ENCODE measurements at regions of chr3 and their contacts with region 1.

Region 1: GRCh38 chr3:101381809-101382208 is 61.4 kb upstream of the IMPG2 start:
- DNase-seq: no peak
- ATAC-seq: peak; percentile 34
- H3K4me3 Mint-ChIP-seq: no peak overlapping the region
- H3K27ac Mint-ChIP-seq: no peak overlapping the region
- H3K4me1 Mint-ChIP-seq: peaks cover 43% of the 10 kb centered on the region
- H3K27me3 Mint-ChIP-seq: no peaks in the 10 kb centered on the region
- CTCF ChIP-seq: no peak

Region 2: DNA sequence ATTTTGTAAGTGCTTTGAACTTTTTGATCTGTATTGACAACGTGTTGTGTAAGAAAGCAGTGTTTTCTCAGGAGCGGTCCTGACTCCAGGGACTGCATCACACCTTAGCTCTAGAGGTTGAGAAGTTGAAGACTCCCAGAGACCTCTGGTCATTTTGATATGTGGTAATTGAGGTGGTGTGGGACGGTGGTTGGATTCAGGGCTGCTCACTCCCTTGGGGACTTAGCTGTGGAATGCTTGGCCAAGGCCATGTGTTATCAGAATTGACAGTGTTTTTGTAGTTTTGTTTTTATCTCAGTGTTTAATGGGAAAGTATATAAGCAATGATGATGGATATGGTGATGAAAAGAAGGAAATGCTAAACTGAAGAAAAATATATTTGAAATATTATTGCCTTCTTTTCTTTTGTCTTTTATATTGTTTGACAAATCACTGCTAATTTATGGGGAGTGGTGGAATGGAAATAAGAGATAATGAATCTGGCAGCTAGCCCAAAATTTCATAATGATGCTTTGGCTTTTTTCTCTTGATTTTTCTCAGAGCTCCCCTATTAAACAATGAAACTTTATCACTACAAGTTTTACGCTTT is 1548.1 kb before region 1 on chr3:
- CTCF ChIA-PET with region 1: no interaction called
- POLR2A ChIA-PET with region 1: no interaction called
- intact Hi-C with region 1: loop called (anchors 5 kb)
- DNase-seq: no peak
- ATAC-seq: no peak
- H3K4me3 Mint-ChIP-seq: no peak overlapping the region
- H3K27ac Mint-ChIP-seq: no peak overlapping the region
- H3K4me1 Mint-ChIP-seq: no peaks in the 10 kb centered on the region
- H3K27me3 Mint-ChIP-seq: no peaks in the 10 kb centered on the region
- CTCF ChIP-seq: no peak

Region 3: GRCh38 chr3:100463002-100463401 is 918.8 kb before region 1 on chr3:
- CTCF ChIA-PET with region 1: interaction called, 6 read pairs
- POLR2A ChIA-PET with region 1: no interaction called
- intact Hi-C with region 1: loop called (anchors 5 kb)
- DNase-seq: no peak
- ATAC-seq: no peak
- H3K4me3 Mint-ChIP-seq: no peak overlapping the region
- H3K27ac Mint-ChIP-seq: no peak overlapping the region
- H3K4me1 Mint-ChIP-seq: no peaks in the 10 kb centered on the region
- H3K27me3 Mint-ChIP-seq: peaks cover 3% of the 10 kb centered on the region
- CTCF ChIP-seq: no peak

Region 4: GRCh38 chr3:100737334-100737733 is 644.5 kb before region 1 on chr3:
- CTCF ChIA-PET with region 1: no interaction called
- POLR2A ChIA-PET with region 1: no interaction called
- intact Hi-C with region 1: loop called (anchors 1 kb)
- DNase-seq: no peak
- ATAC-seq: no peak
- H3K4me3 Mint-ChIP-seq: no peak overlapping the region
- H3K27ac Mint-ChIP-seq: no peak overlapping the region
- H3K4me1 Mint-ChIP-seq: no peaks in the 10 kb centered on the region
- H3K27me3 Mint-ChIP-seq: no peaks in the 10 kb centered on the region
- CTCF ChIP-seq: no peak

Region 5: DNA sequence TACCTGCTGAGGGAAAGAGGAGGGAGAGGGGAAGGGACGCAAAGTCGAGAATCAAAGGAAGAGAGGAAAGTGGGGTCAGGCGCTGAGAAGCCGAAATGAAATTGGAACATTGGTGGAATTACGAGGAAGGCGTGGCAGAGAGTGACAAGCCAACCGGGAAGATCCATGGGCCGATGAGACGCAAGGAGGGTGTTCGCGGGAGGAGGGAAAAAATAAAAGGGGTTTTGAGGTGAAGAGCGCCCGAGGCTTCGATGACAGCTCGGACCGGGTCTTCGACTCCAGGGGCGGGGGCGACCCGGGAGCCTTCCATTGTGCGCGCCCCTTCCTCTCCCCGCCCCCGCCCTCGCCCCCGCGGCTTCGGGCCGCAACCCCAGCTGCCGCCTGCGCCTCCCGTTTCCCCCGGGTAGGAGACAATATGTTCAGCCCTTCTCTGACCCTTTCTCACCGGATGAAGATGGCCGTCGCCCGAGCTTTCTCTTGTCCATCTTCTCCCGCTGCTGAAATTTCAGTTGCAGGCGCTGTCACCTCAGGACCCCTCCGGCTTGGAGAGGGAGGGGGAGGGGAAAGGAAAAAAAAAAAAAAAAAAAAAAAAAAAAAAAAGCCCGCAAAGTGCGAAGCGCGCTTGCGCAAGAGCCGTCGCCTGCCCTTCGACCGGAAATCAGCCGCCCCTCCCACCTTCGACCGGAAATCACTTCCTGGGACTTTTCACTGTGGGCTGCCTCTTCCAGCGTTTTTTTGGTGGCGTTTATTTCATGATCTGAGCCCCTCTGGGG is 131.0 kb after region 1 on chr3 and contains the start of gene SENP7:
- CTCF ChIA-PET with region 1: no interaction called
- POLR2A ChIA-PET with region 1: no interaction called
- intact Hi-C with region 1: loop called (anchors 2 kb)
- DNase-seq: peak; percentile 74
- ATAC-seq: peak; percentile 72
- H3K4me3 Mint-ChIP-seq: peak within 1 kb of the TSS; percentile 98
- H3K27ac Mint-ChIP-seq: peak within 1 kb of the TSS; percentile 99
- H3K4me1 Mint-ChIP-seq: peaks cover 35% of the 10 kb centered on the region
- H3K27me3 Mint-ChIP-seq: no peaks in the 10 kb centered on the region
- CTCF ChIP-seq: no peak
- total RNA-seq, gene SENP7: 18.6 and 22.1 TPM in 2 replicates

Measured in activated B cell treated with CpG ODN at 0.5 μM for 24 hours (primary cell).